Activated T-helper 1 cell treated with anti-CD3 and anti-CD28 coated beads, Interleukin-12 subunit alpha, Interleukin-12 subunit beta, Interleukin-2, Interleukin-4 antibody, amounts not matched to agents 30 ng/mL and 10 ng/mL and 1 ng/mL, durations not matched to agents 14 hours and 24 hours and 36 hours (primary cell): ENCODE measurements at regions of chr14 and their contacts with region 1.

Region 1: GRCh38 chr14:89040460-89041259 is 216.2 kb downstream of the TTC8 start:
- DNase-seq: peak; percentile 63
- H3K4me3 Mint-ChIP-seq: peak overlapping the region; percentile 56
- H3K27ac Mint-ChIP-seq: no peak overlapping the region
- H3K4me1 Mint-ChIP-seq: no peaks in the 10 kb centered on the region
- H3K27me3 Mint-ChIP-seq: peaks cover 18% of the 10 kb centered on the region

Region 2: GRCh38 chr14:89060191-89060590 is 19.5 kb after region 1 on chr14:
- intact Hi-C with region 1: no loop called
- DNase-seq: no peak
- H3K4me3 Mint-ChIP-seq: no peak overlapping the region
- H3K27ac Mint-ChIP-seq: no peak overlapping the region
- H3K4me1 Mint-ChIP-seq: no peaks in the 10 kb centered on the region
- H3K27me3 Mint-ChIP-seq: peaks cover 17% of the 10 kb centered on the region

Region 3: GRCh38 chr14:89178802-89179535 is 138.3 kb after region 1 on chr14:
- intact Hi-C with region 1: loop called (anchors 1 kb)
- DNase-seq: no peak
- H3K4me3 Mint-ChIP-seq: no peak overlapping the region
- H3K27ac Mint-ChIP-seq: peak overlapping the region; percentile 25
- H3K4me1 Mint-ChIP-seq: peaks cover 6% of the 10 kb centered on the region
- H3K27me3 Mint-ChIP-seq: no peaks in the 10 kb centered on the region

Region 4: GRCh38 chr14:89899917-89900663 is 859.4 kb after region 1 on chr14:
- intact Hi-C with region 1: loop called (anchors 1 kb)
- DNase-seq: no peak
- H3K4me3 Mint-ChIP-seq: no peak overlapping the region
- H3K27ac Mint-ChIP-seq: no peak overlapping the region
- H3K4me1 Mint-ChIP-seq: peaks cover 7% of the 10 kb centered on the region
- H3K27me3 Mint-ChIP-seq: peaks cover 5% of the 10 kb centered on the region

Region 5: GRCh38 chr14:89915114-89915878 is 874.6 kb after region 1 on chr14:
- intact Hi-C with region 1: loop called (anchors 1 kb)
- DNase-seq: peak; percentile 38
- H3K4me3 Mint-ChIP-seq: no peak overlapping the region
- H3K27ac Mint-ChIP-seq: no peak overlapping the region
- H3K4me1 Mint-ChIP-seq: peaks cover 4% of the 10 kb centered on the region
- H3K27me3 Mint-ChIP-seq: peaks cover 12% of the 10 kb centered on the region